ENCODE measurements at regions of chr19 and their contacts with region 1.

Region 1: DNA sequence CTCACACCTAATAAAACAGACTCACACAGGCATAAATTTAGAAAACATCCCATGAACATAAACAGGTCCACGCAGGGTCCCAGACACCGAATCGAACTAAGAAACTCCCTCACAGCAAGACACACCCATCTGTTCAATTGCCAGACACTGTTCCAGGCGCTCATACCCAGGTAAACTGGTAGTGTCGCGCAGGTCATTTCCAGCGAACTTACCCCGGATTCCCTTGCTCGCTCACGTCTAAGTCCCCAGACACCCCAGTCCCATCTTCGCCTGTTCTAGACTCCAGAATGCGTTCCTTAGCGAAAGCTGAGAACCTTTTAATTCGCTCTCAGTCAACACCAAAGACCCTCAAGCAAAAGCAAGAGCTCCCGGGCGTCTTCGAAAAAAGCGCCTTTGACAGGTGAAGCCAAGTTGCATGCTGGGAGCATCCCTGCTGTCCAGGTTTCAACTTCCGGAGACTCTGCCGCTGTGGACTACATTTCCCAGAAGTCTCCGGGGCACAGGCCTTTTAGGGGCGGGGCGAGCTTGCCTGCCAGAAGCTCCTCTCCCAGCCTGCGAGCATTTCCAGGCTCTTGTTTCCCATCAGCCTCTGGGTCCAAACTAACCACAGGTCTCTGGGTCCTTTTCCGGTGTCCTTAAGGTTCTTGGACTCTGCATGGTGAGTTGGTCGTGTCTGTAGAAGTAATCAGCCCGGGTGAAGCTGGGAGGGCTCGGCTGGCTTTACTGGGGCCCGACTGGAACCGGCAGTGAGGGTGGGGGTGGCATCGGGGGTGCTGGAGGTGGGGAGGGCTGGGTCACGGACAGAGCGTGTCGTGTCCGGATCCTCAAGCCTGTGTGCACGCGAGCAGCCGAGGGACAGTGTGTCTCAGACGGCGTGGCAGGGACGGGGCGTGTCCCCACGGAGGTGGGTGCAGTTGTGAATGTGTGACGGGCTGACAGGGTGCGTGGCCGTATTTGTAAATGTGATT is at the start of gene ZNF283:
- DNase-seq: peak; percentile 89
- ATAC-seq: peak; percentile 96
- H3K4me3 ChIP-seq: peak within 1 kb of the TSS; percentile 68 to 74
- H3K27ac ChIP-seq: no peak within 1 kb of the TSS
- H3K4me1 ChIP-seq: peaks cover 3 to 6% of the 10 kb centered on the region in 2 experiments; a peak in 1 of 4 replicates
- H3K27me3 ChIP-seq: no peaks in the 10 kb centered on the region
- CTCF ChIP-seq: no peak
- POLR2A ChIP-seq: no peak
- RAD21 ChIP-seq: 0 out of 2 replicates have a peak, but pooled peaks have one; percentile 2
- total RNA-seq, gene ZNF283: 7.6 TPM

Region 2: GRCh38 chr19:43842007-43842406 is 14.9 kb after region 1 on chr19:
- CTCF ChIA-PET with region 1: no interaction called
- POLR2A ChIA-PET with region 1: no interaction called
- RAD21 ChIA-PET with region 1: no interaction called
- intact Hi-C with region 1: no loop called
- DNase-seq: no peak
- ATAC-seq: no peak
- H3K4me3 ChIP-seq: no peak overlapping the region
- H3K27ac ChIP-seq: no peak overlapping the region
- H3K4me1 ChIP-seq: no peaks in the 10 kb centered on the region
- H3K27me3 ChIP-seq: no peaks in the 10 kb centered on the region
- CTCF ChIP-seq: no peak
- POLR2A ChIP-seq: no peak
- RAD21 ChIP-seq: no peak

Region 3: DNA sequence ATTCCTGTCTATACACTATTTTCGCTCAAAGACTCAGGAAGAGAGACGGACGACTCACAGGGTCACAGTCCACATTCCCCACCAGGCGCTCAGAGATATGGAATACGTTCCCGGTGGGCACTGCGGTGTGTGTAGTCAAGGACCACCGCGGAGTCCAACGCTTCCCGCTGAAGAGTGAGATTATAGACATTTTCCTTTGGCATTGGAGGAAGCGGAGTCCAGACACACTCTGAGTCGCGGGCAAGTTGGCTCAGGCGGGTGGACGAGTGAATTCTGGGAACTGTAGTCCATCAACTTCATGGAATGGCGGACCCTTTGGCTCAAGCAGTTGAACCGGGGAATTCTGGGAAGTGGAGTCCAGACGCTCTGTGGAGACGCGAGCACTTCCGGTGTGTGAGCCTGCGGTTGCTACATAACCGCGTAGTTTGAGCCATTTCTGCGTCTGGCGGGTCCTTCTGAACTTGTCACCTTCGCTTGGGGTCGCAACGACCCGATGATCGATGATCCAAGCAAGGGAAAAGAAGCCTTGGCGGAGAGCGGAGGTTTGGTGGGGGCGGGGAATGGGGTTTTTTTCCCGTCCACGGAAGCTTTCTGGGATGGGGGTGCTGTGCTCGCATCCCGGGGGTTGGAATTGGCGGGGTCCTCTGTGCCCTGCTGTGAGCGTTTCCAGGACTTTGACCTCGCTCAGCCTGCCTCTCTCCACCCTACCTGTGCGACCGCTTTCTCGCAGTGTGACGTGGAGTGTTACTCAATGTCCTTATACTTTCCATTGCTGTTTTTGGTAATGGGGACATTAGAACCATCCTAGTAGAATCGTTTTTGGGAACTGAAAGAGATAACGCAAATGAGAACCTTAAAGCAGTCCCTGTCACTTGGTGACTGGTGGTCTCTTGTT is 175.7 kb after region 1 on chr19 and contains the start of gene ZNF230:
- CTCF ChIA-PET with region 1: no interaction called
- POLR2A ChIA-PET with region 1: no interaction called
- RAD21 ChIA-PET with region 1: no interaction called
- intact Hi-C with region 1: loop called (anchors 1 kb)
- DNase-seq: peak; percentile 92
- ATAC-seq: peak; percentile 95
- H3K4me3 ChIP-seq: peak within 1 kb of the TSS; percentile 86 to 88
- H3K27ac ChIP-seq: 0 out of 2 replicates have a peak within 1 kb of the TSS, but pooled peaks have one; percentile 0
- H3K4me1 ChIP-seq: peaks cover 0 to 13% of the 10 kb centered on the region in 2 experiments; a peak in 2 of 4 replicates
- H3K27me3 ChIP-seq: no peaks in the 10 kb centered on the region
- CTCF ChIP-seq: no peak
- POLR2A ChIP-seq: no peak
- RAD21 ChIP-seq: no peak
- total RNA-seq, gene ZNF230: 2.8 TPM

Region 4: GRCh38 chr19:44059229-44059628 is 232.2 kb after region 1 on chr19:
- CTCF ChIA-PET with region 1: no interaction called
- POLR2A ChIA-PET with region 1: no interaction called
- RAD21 ChIA-PET with region 1: no interaction called
- intact Hi-C with region 1: no loop called
- DNase-seq: no peak
- ATAC-seq: no peak
- H3K4me3 ChIP-seq: no peak overlapping the region
- H3K27ac ChIP-seq: no peak overlapping the region
- H3K4me1 ChIP-seq: no peaks in the 10 kb centered on the region
- H3K27me3 ChIP-seq: no peaks in the 10 kb centered on the region
- CTCF ChIP-seq: no peak
- POLR2A ChIP-seq: no peak
- RAD21 ChIP-seq: no peak